ENCODE measurements at regions of chr20 and their contacts with region 1.

Region 1: GRCh38 chr20:38674092-38674764 is 50.1 kb upstream of the SLC32A1 start:
- DNase-seq: peak; percentile 79
- H3K4me3 Mint-ChIP-seq: peak overlapping the region; percentile 75
- H3K27ac Mint-ChIP-seq: no peak overlapping the region
- H3K4me1 Mint-ChIP-seq: peaks cover 7% of the 10 kb centered on the region
- H3K27me3 Mint-ChIP-seq: peaks cover 31% of the 10 kb centered on the region

Region 2: DNA sequence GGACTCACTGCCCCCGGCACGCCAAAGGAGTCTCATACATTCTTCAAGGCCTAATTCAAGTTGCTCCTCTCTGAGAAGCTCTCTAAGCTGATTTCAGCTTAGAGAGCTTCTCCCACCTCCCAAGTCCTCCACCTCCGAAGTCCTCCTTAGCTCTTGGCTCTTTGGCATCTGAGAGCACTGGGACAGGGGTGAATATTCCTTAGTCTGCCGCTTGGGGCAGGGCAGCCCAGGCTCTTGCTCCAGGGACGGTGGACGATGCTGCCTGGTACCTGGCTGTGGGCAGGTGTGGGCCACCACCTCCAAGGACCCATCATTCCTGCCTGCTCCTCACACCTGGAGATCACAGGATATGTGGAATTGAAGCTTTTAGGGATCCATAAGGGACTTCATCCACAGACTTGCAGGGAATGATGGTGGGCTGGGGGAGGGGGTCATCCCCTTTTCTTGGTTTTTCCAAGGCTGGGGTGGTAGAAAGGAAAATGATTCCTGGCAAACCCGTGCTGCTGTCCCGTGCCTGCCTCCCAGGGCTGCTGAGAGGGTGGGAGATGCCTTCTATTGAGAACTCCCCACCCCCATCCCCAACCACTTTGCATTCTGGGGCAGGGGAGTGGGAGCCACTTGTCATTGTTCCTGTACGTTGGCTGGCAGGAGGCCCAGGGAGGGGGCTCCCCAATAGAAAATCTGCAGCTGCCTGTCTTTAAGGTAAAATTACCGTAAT is 15.2 kb before region 1 on chr20:
- CTCF ChIA-PET with region 1: interaction called, 12 read pairs
- POLR2A ChIA-PET with region 1: interaction called, 3 read pairs
- intact Hi-C with region 1: no loop called
- DNase-seq: peak; percentile 36
- H3K4me3 Mint-ChIP-seq: no peak overlapping the region
- H3K27ac Mint-ChIP-seq: no peak overlapping the region
- H3K4me1 Mint-ChIP-seq: no peaks in the 10 kb centered on the region
- H3K27me3 Mint-ChIP-seq: peaks cover 37% of the 10 kb centered on the region

Region 3: DNA sequence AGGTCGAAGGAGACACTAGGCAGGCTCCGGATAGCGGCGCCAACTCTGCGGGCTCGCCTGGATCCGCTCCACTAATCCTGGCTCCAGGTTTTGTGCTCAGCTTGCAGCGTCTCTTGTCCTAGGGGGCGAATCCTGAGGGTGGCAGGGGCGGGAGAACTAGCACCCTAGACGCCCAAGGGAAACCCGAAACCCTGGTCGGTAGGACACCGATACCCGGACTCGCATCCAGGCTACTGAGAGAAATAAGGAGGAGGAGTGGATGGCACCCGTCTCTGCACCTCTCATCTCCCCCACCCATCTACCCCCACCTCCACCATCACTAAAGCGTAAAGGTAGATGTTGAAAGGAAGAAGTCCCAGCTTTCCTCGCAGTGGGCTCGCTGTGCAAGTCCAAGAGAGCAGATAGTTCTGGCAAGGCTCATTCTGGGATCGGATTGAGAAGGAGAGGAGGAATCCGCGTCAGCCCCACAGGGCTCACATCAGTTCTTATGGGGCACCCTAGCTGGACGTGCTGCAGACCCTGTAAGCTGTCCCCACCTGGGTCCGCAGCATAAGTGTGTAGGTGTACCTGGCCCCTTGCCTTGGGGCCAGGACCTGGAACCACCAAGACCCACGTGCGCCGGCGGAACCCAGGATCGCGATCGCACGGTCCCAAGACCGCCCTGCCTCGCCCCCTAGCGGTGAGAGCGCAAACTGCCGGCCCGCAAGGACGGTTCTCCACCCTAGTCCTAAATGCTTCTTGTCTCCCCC is 56.9 kb after region 1 on chr20:
- CTCF ChIA-PET with region 1: interaction called, 3 read pairs
- POLR2A ChIA-PET with region 1: interaction called, 6 read pairs
- intact Hi-C with region 1: loop called (anchors 2 kb)
- DNase-seq: peak; percentile 85
- H3K4me3 Mint-ChIP-seq: peak overlapping the region; percentile 58
- H3K27ac Mint-ChIP-seq: peak overlapping the region; percentile 52
- H3K4me1 Mint-ChIP-seq: peaks cover 42% of the 10 kb centered on the region
- H3K27me3 Mint-ChIP-seq: peaks cover 85% of the 10 kb centered on the region

Measured in activated CD4-positive, alpha-beta memory T cell treated with anti-CD3 and anti-CD28 coated beads for 36 hours (primary cell).